Thyroid gland (tissue), 4 donors: ENCODE measurements at regions of chr3 and their contacts with region 1.

Region 1: GRCh38 chr3:183477801-183478456 is 49.5 kb upstream of the MCF2L2 start:
- DNase-seq: no peak
- H3K4me3 ChIP-seq: no peak overlapping the region
- H3K27ac ChIP-seq: no peak overlapping the region
- H3K4me1 ChIP-seq: no peaks in the 10 kb centered on the region
- H3K27me3 ChIP-seq: no peaks in the 10 kb centered on the region
- CTCF ChIP-seq: no peak
- POLR2A ChIP-seq: no peak

Region 2: GRCh38 chr3:183884427-183885296 is 406.7 kb after region 1 on chr3 and contains the start of gene PARL:
- intact Hi-C with region 1: loop called (anchors 10 kb)
- DNase-seq: peak; percentile 96 to 97
- H3K4me3 ChIP-seq: peak within 1 kb of the TSS; percentile 57 to 99 (median 79)
- H3K27ac ChIP-seq: peak within 1 kb of the TSS in 2 of 3 donors; percentile 59 to 62
- H3K4me1 ChIP-seq: peaks cover 16 to 19% of the 10 kb centered on the region in 2 donors
- H3K27me3 ChIP-seq: no peaks in the 10 kb centered on the region
- CTCF ChIP-seq: peak; percentile 72 to 98 (median 90)
- POLR2A ChIP-seq: peak in 1 of 2 donors; percentile 66
- total RNA-seq, gene PARL: 33.8 to 52.0 (median 42.6) TPM